CD4-positive, alpha-beta T cell (primary cell): ENCODE measurements at regions of chr6 and their contacts with region 1.

Region 1: DNA sequence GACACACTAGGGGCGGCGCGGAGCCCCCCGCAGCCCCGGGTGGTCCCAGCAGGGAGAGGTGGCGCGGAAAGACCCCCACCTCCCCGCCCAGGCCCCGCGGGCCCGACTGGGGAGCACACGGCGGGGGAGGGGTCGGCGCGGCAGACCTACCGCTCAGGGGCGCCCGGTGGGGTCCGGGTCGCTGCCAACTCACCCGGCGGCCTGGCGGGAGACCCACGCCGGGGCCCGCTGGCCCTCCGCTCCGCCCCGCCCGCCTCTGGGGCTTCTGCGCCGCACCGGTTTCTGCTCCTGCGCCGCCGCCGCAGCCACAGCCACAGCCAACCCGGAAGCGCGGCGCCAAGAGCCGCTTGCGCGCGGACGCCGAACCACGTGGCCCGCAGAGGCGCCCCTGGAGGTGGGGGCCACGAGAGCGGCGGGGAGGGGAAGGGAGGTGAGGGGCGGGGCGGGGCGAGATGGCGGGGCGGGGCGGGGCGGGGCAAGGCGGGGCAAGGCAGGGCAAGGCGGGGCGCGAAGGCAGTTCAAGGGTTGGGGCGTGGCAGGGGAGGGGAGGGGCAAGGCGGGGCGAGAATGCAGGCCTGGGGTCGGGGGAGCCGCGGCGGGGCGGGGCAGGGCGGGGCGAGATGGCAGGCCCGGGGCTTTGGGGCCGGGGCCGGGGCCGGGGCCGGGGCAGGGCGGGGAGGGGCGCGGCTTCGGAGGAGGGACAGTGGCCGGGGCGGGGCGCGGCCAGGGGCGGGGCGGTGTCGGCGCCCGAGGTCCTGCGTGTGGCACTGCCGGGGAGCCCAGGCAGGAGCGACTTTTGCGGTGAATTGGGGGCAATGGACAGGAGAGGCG is at the start of gene ZBTB24:
- DNase-seq: peak; percentile 78 to 97 (median 88)
- ATAC-seq: peak; percentile 87
- H3K4me3 ChIP-seq: peak within 1 kb of the TSS; percentile 85
- H3K4me3 Mint-ChIP-seq: peak within 1 kb of the TSS; percentile 96
- H3K27ac ChIP-seq: peak within 1 kb of the TSS; percentile 68 to 77
- H3K27ac Mint-ChIP-seq: peak within 1 kb of the TSS; percentile 79
- H3K4me1 ChIP-seq: peaks cover 36% of the 10 kb centered on the region
- H3K4me1 Mint-ChIP-seq: peaks cover 55% of the 10 kb centered on the region
- H3K27me3 ChIP-seq: no peaks in the 10 kb centered on the region
- H3K27me3 Mint-ChIP-seq: no peaks in the 10 kb centered on the region
- CTCF ChIP-seq: no peak
- total RNA-seq, gene ZBTB24: 10.4 to 10.5 TPM

Region 2: GRCh38 chr6:107716688-107717089 is 1766.4 kb before region 1 on chr6:
- CTCF ChIA-PET with region 1: no interaction called
- POLR2A ChIA-PET with region 1: no interaction called
- intact Hi-C with region 1: loop called in 1 of 2 experiments (anchors 10 kb)
- DNase-seq: peak; percentile 49 to 95 (median 66)
- ATAC-seq: peak; percentile 91
- H3K4me3 ChIP-seq: no peak overlapping the region
- H3K4me3 Mint-ChIP-seq: peak overlapping the region; percentile 75
- H3K27ac ChIP-seq: peak overlapping the region in 1 of 2 donors; percentile 63
- H3K27ac Mint-ChIP-seq: peak overlapping the region; percentile 91
- H3K4me1 ChIP-seq: peaks cover 76% of the 10 kb centered on the region
- H3K4me1 Mint-ChIP-seq: peaks cover 77% of the 10 kb centered on the region
- H3K27me3 ChIP-seq: no peaks in the 10 kb centered on the region
- H3K27me3 Mint-ChIP-seq: no peaks in the 10 kb centered on the region
- CTCF ChIP-seq: no peak

Region 3: GRCh38 chr6:108848116-108848868 is 634.8 kb before region 1 on chr6 and contains the start of gene ARMC2:
- CTCF ChIA-PET with region 1: no interaction called
- POLR2A ChIA-PET with region 1: no interaction called
- intact Hi-C with region 1: loop called in 1 of 2 experiments (anchors 5 kb)
- DNase-seq: peak; percentile 69 to 94 (median 80)
- ATAC-seq: peak; percentile 78
- H3K4me3 ChIP-seq: peak within 1 kb of the TSS; percentile 67
- H3K4me3 Mint-ChIP-seq: peak within 1 kb of the TSS; percentile 92
- H3K27ac ChIP-seq: peak within 1 kb of the TSS; percentile 54 to 61
- H3K27ac Mint-ChIP-seq: peak within 1 kb of the TSS; percentile 88
- H3K4me1 ChIP-seq: peaks cover 16% of the 10 kb centered on the region
- H3K4me1 Mint-ChIP-seq: peaks cover 35% of the 10 kb centered on the region
- H3K27me3 ChIP-seq: no peaks in the 10 kb centered on the region
- H3K27me3 Mint-ChIP-seq: no peaks in the 10 kb centered on the region
- CTCF ChIP-seq: no peak
- total RNA-seq, gene ARMC2: 5.2 to 5.7 TPM

Region 4: GRCh38 chr6:109440331-109441068 is 42.6 kb before region 1 on chr6 and contains the starts of genes PPIL6 and SMPD2:
- CTCF ChIA-PET with region 1: interaction called, 15 read pairs
- POLR2A ChIA-PET with region 1: interaction called, 24 read pairs
- intact Hi-C with region 1: loop called (anchors 2 kb)
- DNase-seq: peak; percentile 54 to 92 (median 73)
- ATAC-seq: peak; percentile 75
- H3K4me3 ChIP-seq: peak within 1 kb of the TSS; percentile 81
- H3K4me3 Mint-ChIP-seq: peak within 1 kb of the TSS; percentile 95
- H3K27ac ChIP-seq: peak within 1 kb of the TSS; percentile 74 to 82
- H3K27ac Mint-ChIP-seq: peak within 1 kb of the TSS; percentile 93
- H3K4me1 ChIP-seq: peaks cover 39% of the 10 kb centered on the region
- H3K4me1 Mint-ChIP-seq: peaks cover 27% of the 10 kb centered on the region
- H3K27me3 ChIP-seq: no peaks in the 10 kb centered on the region
- H3K27me3 Mint-ChIP-seq: no peaks in the 10 kb centered on the region
- CTCF ChIP-seq: peak; percentile 4
- total RNA-seq, gene PPIL6: 0.84 to 1.3 TPM
- total RNA-seq, gene SMPD2: 25.7 to 27.3 TPM

Region 5: DNA sequence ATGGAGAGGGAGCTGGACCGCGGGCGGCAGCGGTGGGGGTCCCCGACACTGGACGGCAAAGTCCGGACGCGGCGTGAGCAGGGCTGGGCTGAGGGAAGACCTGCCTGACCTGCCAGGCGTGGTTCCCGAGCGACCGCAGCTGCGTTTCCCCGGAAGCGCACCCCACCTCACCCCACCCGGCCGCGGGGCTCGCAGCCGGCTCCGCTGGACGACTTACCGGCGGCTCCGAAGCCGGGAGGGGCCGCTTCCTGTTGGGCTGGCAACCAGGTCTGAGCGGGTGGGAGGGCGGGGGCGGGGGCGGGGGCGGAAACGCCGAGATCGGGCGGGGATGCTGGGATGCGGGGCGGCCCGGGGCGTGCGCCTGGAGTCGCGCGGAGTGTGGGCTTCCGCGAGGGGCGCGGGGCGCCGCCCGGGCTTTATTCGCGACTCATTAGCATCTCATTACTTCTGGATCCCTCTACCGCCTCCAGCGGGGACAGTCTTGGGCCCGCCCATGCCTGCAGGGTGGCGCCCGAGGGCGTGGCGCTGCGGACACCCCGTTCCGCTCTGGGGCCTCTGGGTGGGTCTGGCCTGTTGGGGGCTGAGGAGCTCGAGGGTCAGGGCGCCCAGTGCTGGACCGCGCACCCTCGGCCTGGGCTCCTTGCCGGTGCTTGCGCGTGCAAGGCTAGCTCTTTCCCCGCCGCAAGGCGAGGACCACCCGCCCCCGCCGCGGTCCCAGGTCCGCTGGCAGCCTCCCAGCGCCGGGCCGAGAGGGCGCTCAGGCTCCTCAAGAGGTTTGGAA is 27.4 kb before region 1 on chr6 and contains the start of gene MICAL1:
- CTCF ChIA-PET with region 1: interaction called, 5 read pairs
- POLR2A ChIA-PET with region 1: interaction called, 86 read pairs
- intact Hi-C with region 1: loop called (anchors 1 to 2 kb)
- DNase-seq: peak; percentile 45 to 92 (median 70)
- ATAC-seq: peak; percentile 58
- H3K4me3 ChIP-seq: peak within 1 kb of the TSS; percentile 97
- H3K4me3 Mint-ChIP-seq: peak within 1 kb of the TSS; percentile 99
- H3K27ac ChIP-seq: peak within 1 kb of the TSS; percentile 91 to 94
- H3K27ac Mint-ChIP-seq: peak within 1 kb of the TSS; percentile 95
- H3K4me1 ChIP-seq: peaks cover 74% of the 10 kb centered on the region
- H3K4me1 Mint-ChIP-seq: peaks cover 66% of the 10 kb centered on the region
- H3K27me3 ChIP-seq: no peaks in the 10 kb centered on the region
- H3K27me3 Mint-ChIP-seq: no peaks in the 10 kb centered on the region
- CTCF ChIP-seq: no peak
- total RNA-seq, gene MICAL1: 106 to 107 TPM